Cardiac septum (tissue), 1 donor: ENCODE measurements at regions of chr1 and their contacts with region 1.

Region 1: DNA sequence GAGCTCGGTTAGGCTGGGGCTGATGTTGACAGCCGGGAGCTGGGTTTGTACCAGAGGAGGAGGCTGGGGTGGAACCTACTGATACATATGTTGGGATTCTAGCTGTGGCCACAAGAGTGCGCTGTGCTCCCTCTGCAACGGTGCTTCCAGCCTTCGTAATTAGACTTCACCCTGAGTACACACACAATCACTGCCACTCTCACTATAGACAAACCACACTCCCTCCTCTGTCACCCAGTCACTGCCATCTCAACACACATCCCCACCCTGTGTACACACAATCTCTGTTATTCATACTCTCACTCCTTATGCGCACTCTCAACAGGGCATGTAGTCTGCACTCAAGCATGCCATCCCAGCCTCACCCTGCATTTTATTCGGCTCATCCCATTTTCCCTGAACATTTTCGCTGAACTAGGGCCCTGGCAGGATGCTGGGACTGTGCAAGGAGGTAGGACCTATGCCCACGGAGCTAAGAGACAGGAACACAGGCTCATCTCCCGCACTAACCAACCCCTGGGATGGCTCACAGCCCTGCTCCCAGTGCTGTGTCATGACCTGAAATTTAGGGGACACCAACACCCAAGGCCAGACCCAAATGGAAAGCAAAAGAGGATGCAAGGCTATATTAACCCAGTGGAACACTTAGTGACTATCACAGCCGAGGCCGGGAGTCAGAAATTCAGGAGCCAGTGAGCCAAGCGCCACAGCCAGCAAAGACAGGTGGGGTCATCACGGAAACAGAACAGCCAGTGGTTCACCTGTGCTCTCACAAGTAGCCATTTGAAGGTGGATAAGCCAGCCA is 5.7 kb downstream of the GJB3 start:
- DNase-seq: no peak

Region 2: DNA sequence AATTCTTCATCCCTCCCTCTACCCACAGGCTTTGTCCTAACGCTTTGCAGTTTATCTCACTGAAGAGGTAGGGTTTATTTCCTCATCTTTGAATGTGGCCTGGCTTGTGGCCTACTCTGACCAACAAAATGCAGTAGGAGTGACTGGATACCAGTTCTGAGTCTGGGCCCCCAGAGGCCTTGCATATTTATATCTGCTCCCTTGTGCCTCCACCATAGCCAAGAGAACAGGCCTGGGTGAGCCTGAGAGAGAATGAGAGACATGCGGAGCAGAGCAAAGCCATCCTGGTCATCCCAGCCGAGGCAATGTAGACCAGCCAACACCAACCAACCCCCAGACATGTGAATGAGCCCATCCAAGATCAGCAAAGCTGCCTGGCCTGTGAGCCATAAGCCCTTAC is 42.5 kb after region 1 on chr1:
- intact Hi-C with region 1: no loop called
- DNase-seq: no peak

Region 3: DNA sequence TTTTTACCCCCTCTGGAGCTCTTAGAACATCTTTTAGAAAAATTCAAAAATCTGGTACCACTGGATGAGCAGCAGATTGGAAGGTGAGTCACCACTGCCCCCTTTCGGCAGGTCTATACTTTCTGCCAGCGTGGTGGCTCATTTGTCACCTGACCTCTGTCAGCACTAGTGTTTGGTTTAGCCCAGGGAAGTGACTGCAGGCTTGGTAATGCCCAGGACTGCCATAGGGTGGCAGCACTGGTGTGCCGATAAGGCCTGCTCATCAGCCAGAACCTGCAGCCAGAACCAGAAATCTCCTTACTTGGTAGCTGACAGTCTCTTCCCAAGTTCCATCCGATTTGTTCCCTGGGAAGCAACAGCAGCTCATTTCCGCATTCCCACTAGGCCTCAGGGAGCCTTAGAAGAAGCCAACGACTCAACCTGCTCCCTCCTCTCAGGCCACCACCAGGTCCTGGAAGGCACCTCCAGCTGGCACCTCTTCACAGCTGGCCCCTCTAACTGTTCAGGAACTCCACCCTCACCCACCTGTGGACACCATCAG is 66.0 kb after region 1 on chr1:
- intact Hi-C with region 1: loop called (anchors 1 kb)
- DNase-seq: peak; percentile 91

Region 4: DNA sequence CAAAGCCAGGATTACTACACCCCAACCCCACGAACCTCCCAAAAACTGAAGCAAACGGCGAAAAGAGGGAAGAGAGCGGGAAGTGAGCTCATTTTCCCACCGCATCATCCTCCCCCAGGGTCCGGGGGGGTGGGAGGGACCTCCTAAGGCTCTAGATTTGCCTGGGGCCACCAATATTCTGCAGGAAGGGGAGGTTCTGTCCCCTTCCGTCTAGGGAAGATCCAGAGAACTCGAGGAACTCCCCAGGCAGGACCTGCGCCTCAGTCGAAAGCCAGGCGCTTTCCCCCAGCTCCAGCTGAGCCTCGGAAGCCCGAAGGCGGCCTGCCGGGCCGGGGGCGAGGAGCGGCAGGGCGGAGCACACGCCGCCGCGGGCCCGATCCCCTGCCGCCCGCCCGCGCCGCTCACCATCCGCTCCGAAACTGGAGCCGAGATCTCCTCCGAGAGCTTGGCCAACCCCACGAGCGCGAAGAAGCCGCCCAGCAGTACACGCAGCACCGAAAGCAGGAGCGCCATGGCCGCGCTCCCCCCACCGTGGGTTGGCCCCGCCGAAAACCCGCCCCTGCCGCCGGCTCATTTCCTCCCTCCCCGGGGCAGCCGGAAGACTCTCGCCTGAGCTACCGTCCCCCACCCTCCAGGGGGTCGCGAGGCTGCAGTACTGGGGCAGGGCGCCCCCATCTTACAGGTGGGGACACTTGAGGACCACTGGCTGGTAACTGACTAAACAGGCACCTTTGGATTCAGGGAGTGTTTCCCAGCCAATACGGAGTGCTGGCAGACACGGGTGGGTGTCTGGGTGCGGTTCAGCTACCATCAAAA is 198.3 kb after region 1 on chr1 and contains the start of gene TMEM35B:
- intact Hi-C with region 1: loop called (anchors 5 kb)
- DNase-seq: peak; percentile 87
- total RNA-seq, gene TMEM35B: 8.5 TPM

Region 5: GRCh38 chr1:35157904-35158303 is 371.2 kb after region 1 on chr1:
- intact Hi-C with region 1: no loop called
- DNase-seq: no peak